ENCODE measurements at regions of chr6 and their contacts with region 1.

Region 1: GRCh38 chr6:129498950-129499842 is 210.8 kb downstream of the ARHGAP18 start:
- DNase-seq: peak in 4 of 14 experiments; percentile 7 to 77 (median 74)
- ATAC-seq: peak; percentile 82
- H3K4me3 ChIP-seq: peak overlapping the region; percentile 10
- H3K4me3 Mint-ChIP-seq: peak overlapping the region; percentile 18
- H3K27ac ChIP-seq: no peak overlapping the region
- H3K27ac Mint-ChIP-seq: no peak overlapping the region
- H3K4me1 ChIP-seq: peaks cover 18% of the 10 kb centered on the region
- H3K4me1 Mint-ChIP-seq: peaks cover 14% of the 10 kb centered on the region
- H3K27me3 ChIP-seq: no peaks in the 10 kb centered on the region
- H3K27me3 Mint-ChIP-seq: no peaks in the 10 kb centered on the region
- CTCF ChIP-seq: peak; percentile 74

Region 2: GRCh38 chr6:129370268-129370916 is 128.8 kb before region 1 on chr6:
- CTCF ChIA-PET with region 1: no interaction called
- POLR2A ChIA-PET with region 1: no interaction called
- intact Hi-C with region 1: no loop called
- DNase-seq: peak; percentile 4 to 62 (median 24)
- ATAC-seq: no peak
- H3K4me3 ChIP-seq: no peak overlapping the region
- H3K4me3 Mint-ChIP-seq: peak overlapping the region; percentile 45
- H3K27ac ChIP-seq: no peak overlapping the region
- H3K27ac Mint-ChIP-seq: no peak overlapping the region
- H3K4me1 ChIP-seq: no peaks in the 10 kb centered on the region
- H3K4me1 Mint-ChIP-seq: peaks cover 13% of the 10 kb centered on the region
- H3K27me3 ChIP-seq: no peaks in the 10 kb centered on the region
- H3K27me3 Mint-ChIP-seq: no peaks in the 10 kb centered on the region
- CTCF ChIP-seq: peak; percentile 83

Region 3: GRCh38 chr6:129485746-129486145 is 13.4 kb before region 1 on chr6:
- CTCF ChIA-PET with region 1: interaction called, 6 read pairs
- POLR2A ChIA-PET with region 1: interaction called, 7 read pairs
- intact Hi-C with region 1: loop called in 1 of 2 experiments (anchors 1 kb)
- DNase-seq: no peak
- ATAC-seq: no peak
- H3K4me3 ChIP-seq: no peak overlapping the region
- H3K4me3 Mint-ChIP-seq: no peak overlapping the region
- H3K27ac ChIP-seq: no peak overlapping the region
- H3K27ac Mint-ChIP-seq: no peak overlapping the region
- H3K4me1 ChIP-seq: peaks cover 9% of the 10 kb centered on the region
- H3K4me1 Mint-ChIP-seq: peaks cover 24% of the 10 kb centered on the region
- H3K27me3 ChIP-seq: no peaks in the 10 kb centered on the region
- H3K27me3 Mint-ChIP-seq: no peaks in the 10 kb centered on the region
- CTCF ChIP-seq: no peak

Region 4: GRCh38 chr6:129521941-129522630 is 22.9 kb after region 1 on chr6:
- CTCF ChIA-PET with region 1: no interaction called
- POLR2A ChIA-PET with region 1: no interaction called
- intact Hi-C with region 1: no loop called
- DNase-seq: no peak
- ATAC-seq: no peak
- H3K4me3 ChIP-seq: no peak overlapping the region
- H3K4me3 Mint-ChIP-seq: no peak overlapping the region
- H3K27ac ChIP-seq: no peak overlapping the region
- H3K27ac Mint-ChIP-seq: no peak overlapping the region
- H3K4me1 ChIP-seq: no peaks in the 10 kb centered on the region
- H3K4me1 Mint-ChIP-seq: no peaks in the 10 kb centered on the region
- H3K27me3 ChIP-seq: no peaks in the 10 kb centered on the region
- H3K27me3 Mint-ChIP-seq: no peaks in the 10 kb centered on the region
- CTCF ChIP-seq: no peak

Region 5: GRCh38 chr6:129730477-129731165 is 231.4 kb after region 1 on chr6:
- CTCF ChIA-PET with region 1: no interaction called
- POLR2A ChIA-PET with region 1: no interaction called
- intact Hi-C with region 1: loop called (anchors 1 to 5 kb)
- DNase-seq: peak in 7 of 14 experiments; percentile 7 to 73 (median 54)
- ATAC-seq: peak; percentile 60
- H3K4me3 ChIP-seq: no peak overlapping the region
- H3K4me3 Mint-ChIP-seq: no peak overlapping the region
- H3K27ac ChIP-seq: no peak overlapping the region
- H3K27ac Mint-ChIP-seq: no peak overlapping the region
- H3K4me1 ChIP-seq: no peaks in the 10 kb centered on the region
- H3K4me1 Mint-ChIP-seq: peaks cover 14% of the 10 kb centered on the region
- H3K27me3 ChIP-seq: no peaks in the 10 kb centered on the region
- H3K27me3 Mint-ChIP-seq: no peaks in the 10 kb centered on the region
- CTCF ChIP-seq: peak; percentile 83

Region 6: DNA sequence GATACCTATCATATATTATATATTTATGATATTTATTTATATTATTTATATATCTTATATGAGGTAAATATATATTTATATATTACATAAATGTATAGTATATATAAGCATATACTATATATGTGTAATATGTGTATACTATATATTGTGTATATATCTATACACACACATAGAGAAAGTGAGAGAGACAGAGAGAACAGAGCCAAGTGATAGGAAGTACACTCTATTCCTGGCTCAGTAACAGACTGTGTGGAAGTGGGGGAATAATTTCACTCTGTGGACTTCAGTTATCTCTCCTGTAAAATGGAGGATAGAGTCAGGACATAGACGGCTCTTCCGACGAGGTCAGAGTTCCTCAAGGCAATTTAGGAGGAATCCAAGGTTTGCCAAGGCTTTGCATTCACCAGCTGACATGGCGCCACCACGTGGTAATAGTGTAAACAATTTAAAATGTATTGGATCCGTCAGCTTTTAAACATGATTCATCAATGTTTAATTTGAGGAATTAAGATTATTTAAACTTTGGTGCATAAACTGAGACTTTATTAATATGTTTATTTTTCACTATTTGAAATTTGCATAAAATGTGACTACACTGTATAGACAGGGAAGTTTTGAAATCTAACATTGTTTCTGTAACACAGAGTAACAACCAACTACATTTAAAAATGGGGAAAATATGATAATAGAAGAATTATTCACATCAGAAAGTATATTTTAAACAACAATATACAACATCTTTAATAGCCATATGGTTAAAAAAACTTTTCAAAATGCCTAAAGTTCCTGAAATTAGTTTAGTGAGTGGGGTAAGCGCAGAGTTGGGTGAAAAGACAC is 437.4 kb after region 1 on chr6:
- CTCF ChIA-PET with region 1: no interaction called
- POLR2A ChIA-PET with region 1: no interaction called
- intact Hi-C with region 1: loop called (anchors 1 to 2 kb)
- DNase-seq: peak in 12 of 14 experiments; percentile 4 to 72 (median 25)
- ATAC-seq: no peak
- H3K4me3 ChIP-seq: no peak overlapping the region
- H3K4me3 Mint-ChIP-seq: no peak overlapping the region
- H3K27ac ChIP-seq: no peak overlapping the region
- H3K27ac Mint-ChIP-seq: no peak overlapping the region
- H3K4me1 ChIP-seq: no peaks in the 10 kb centered on the region
- H3K4me1 Mint-ChIP-seq: peaks cover 4% of the 10 kb centered on the region
- H3K27me3 ChIP-seq: peaks cover 0 to under 1% of the 10 kb centered on the region in 2 experiments
- H3K27me3 Mint-ChIP-seq: peaks cover 24% of the 10 kb centered on the region
- CTCF ChIP-seq: peak; percentile 88

Region 7: GRCh38 chr6:130020907-130021629 is 521.9 kb after region 1 on chr6:
- CTCF ChIA-PET with region 1: interaction called, 4 read pairs
- POLR2A ChIA-PET with region 1: no interaction called
- intact Hi-C with region 1: loop called (anchors 2 to 5 kb)
- DNase-seq: peak; percentile 64 to 92 (median 68)
- ATAC-seq: peak; percentile 51
- H3K4me3 ChIP-seq: peak overlapping the region; percentile 91
- H3K4me3 Mint-ChIP-seq: peak overlapping the region; percentile 100
- H3K27ac ChIP-seq: peak overlapping the region; percentile 31 to 71
- H3K27ac Mint-ChIP-seq: peak overlapping the region; percentile 96
- H3K4me1 ChIP-seq: peaks cover 14% of the 10 kb centered on the region
- H3K4me1 Mint-ChIP-seq: peaks cover 51% of the 10 kb centered on the region
- H3K27me3 ChIP-seq: no peaks in the 10 kb centered on the region
- H3K27me3 Mint-ChIP-seq: no peaks in the 10 kb centered on the region
- CTCF ChIP-seq: peak; percentile 75

Region 8: GRCh38 chr6:130843575-130844320 is 1344.6 kb after region 1 on chr6:
- CTCF ChIA-PET with region 1: no interaction called
- POLR2A ChIA-PET with region 1: no interaction called
- intact Hi-C with region 1: loop called in 1 of 2 experiments (anchors 2 kb)
- DNase-seq: peak in 4 of 14 experiments; percentile 3 to 76 (median 72)
- ATAC-seq: peak; percentile 87
- H3K4me3 ChIP-seq: no peak overlapping the region
- H3K4me3 Mint-ChIP-seq: no peak overlapping the region
- H3K27ac ChIP-seq: no peak overlapping the region
- H3K27ac Mint-ChIP-seq: no peak overlapping the region
- H3K4me1 ChIP-seq: no peaks in the 10 kb centered on the region
- H3K4me1 Mint-ChIP-seq: peaks cover 2% of the 10 kb centered on the region
- H3K27me3 ChIP-seq: no peaks in the 10 kb centered on the region
- H3K27me3 Mint-ChIP-seq: no peaks in the 10 kb centered on the region
- CTCF ChIP-seq: peak; percentile 66